ENCODE measurements at regions of chr4 and their contacts with region 1.

Region 1: DNA sequence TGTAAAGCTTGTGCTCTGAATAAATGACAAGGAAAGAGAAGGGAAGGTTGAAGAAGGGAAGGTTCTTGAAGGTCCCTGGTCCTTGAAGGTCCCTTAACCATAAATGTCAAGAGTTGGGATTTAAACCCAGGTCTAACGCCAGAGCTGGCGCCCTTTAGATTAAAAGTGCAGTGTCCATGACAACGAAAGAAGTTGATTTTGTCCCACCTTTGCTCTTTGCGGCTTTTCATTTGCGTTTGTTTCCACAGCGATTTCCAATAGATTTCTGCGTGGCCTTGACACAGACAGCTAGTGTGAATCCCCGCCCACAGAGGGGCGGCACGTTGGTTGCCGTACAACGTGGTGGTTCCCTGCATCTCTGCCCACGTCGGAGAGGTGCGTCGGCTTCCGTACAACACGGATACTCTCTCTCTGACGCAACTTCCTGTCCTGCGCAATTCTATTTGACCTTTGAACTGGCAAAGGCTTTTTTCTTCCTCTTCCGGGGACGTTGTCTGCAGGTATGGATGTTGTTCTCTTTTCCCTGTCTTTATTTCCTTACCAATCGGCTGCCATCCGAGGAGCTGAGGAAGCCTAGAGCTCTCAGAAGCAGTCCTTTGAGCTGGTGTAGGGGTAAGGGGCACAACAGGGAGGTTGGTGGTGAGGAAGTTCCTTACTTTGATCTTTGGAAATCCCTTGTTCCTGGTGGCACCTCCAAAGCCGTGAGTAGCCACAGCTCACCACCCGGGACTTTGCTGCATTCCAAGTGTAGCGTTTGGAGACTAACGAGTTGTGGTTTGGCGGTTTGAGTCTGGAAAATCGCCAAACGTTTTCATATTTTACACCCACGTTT is at the start of gene RPL34:
- DNase-seq: peak; percentile 98
- H3K4me3 ChIP-seq: peak within 1 kb of the TSS; percentile 59 to 83
- H3K27ac ChIP-seq: peak within 1 kb of the TSS; percentile 79 to 83
- H3K4me1 ChIP-seq: peaks cover 0 to 27% (median 16%) of the 10 kb centered on the region in 4 donors
- H3K27me3 ChIP-seq: no peaks in the 10 kb centered on the region
- CTCF ChIP-seq: no peak

Region 2: GRCh38 chr4:108650212-108651013 is 30.1 kb after region 1 on chr4 and contains the start of gene OSTC:
- intact Hi-C with region 1: loop called (anchors 5 kb)
- DNase-seq: peak; percentile 95 to 96
- H3K4me3 ChIP-seq: peak within 1 kb of the TSS; percentile 88 to 96
- H3K27ac ChIP-seq: peak within 1 kb of the TSS; percentile 87 to 96
- H3K4me1 ChIP-seq: peaks cover 0 to 37% (median 15%) of the 10 kb centered on the region in 4 donors
- H3K27me3 ChIP-seq: no peaks in the 10 kb centered on the region
- CTCF ChIP-seq: no peak

Region 3: DNA sequence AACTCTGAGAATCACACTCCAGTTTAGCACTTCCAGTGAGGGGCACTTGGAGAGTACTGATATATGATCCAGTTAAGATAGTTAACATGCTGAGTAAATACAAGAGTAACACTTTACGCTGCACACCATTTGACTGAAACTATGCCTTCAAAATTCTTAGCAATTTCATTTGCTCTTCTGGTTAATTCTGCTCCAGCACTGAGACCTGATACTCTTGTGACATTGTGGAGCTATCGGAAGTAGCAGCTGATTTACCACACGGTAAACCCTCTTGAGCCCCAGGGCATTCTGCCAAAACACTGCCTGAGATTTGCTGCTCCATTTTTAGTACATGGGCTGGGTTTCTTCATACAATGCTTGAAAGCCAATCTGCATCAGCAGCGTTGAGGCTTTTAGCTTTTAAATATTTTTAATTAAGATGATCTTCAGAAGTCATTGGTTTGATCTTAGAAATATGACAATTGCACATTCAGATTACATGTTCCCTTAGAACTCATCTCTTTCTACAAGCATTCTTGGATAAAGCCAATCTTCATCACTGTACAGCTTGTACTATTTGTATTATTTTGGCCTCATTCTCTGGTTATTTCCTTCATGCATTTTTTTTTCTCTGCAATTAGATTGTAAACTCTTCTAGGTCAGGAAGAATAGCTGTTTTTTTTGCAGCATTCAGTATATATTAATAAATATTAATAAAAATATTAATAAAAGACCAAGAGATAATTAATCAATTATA is 210.4 kb after region 1 on chr4:
- intact Hi-C with region 1: no loop called
- DNase-seq: no peak
- H3K4me3 ChIP-seq: no peak overlapping the region
- H3K27ac ChIP-seq: no peak overlapping the region
- H3K4me1 ChIP-seq: peaks cover 0 to 4% (median 0%) of the 10 kb centered on the region in 4 donors
- H3K27me3 ChIP-seq: no peaks in the 10 kb centered on the region
- CTCF ChIP-seq: no peak

Region 4: DNA sequence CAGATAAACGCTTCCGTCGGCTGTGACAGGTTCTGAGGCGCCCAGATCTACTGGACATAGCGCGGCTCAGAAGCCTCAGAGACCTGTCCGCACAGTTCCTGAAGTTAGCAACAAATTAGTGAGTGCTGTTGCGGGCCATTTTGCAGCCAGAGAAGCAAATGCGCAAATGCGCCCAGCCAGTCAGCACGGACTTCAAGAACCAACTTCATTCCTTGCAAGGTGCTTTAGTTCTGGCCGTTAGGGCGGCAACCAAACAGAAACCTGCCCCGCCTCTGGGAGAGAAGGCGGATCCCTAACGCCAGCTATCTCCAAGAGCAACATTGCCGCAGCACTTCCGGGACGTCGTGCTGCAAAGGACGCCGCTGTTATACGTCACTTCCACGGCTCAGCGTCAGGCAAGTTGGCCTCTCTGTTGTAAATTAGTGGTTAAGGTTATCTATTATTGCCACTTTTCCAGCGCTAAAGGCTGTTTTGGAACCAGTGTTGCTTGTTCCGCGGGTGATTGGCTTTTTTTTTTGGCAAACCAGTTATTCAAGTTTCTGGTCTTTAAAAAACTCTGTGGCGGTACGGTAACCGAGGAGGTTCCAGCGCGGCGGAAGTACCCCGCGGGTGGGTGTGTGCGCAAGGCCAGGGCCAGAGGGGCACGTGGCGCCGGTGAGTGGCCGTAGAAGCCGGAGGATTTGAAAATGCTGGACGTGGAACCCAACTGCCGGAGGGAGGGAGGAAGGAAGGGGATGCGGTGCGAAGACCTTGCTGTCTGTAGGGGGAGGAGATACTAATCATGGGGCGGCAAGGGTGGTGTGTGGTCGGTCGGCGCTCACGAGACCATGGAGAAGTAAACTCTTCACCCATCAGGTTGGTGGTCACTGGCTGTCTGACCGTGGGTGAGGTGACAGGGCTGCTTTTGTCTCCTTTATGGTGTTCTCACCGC is 1195.1 kb after region 1 on chr4 and contains the start of gene GAR1:
- intact Hi-C with region 1: loop called (anchors 10 kb)
- DNase-seq: peak; percentile 89 to 91
- H3K4me3 ChIP-seq: peak within 1 kb of the TSS; percentile 69 to 87
- H3K27ac ChIP-seq: peak within 1 kb of the TSS; percentile 79 to 82
- H3K4me1 ChIP-seq: peaks cover 0 to 18% (median 12%) of the 10 kb centered on the region in 4 donors
- H3K27me3 ChIP-seq: no peaks in the 10 kb centered on the region
- CTCF ChIP-seq: no peak